Mammary epithelial cell (primary cell): ENCODE measurements at regions of chr11 and their contacts with region 1.

Region 1: DNA sequence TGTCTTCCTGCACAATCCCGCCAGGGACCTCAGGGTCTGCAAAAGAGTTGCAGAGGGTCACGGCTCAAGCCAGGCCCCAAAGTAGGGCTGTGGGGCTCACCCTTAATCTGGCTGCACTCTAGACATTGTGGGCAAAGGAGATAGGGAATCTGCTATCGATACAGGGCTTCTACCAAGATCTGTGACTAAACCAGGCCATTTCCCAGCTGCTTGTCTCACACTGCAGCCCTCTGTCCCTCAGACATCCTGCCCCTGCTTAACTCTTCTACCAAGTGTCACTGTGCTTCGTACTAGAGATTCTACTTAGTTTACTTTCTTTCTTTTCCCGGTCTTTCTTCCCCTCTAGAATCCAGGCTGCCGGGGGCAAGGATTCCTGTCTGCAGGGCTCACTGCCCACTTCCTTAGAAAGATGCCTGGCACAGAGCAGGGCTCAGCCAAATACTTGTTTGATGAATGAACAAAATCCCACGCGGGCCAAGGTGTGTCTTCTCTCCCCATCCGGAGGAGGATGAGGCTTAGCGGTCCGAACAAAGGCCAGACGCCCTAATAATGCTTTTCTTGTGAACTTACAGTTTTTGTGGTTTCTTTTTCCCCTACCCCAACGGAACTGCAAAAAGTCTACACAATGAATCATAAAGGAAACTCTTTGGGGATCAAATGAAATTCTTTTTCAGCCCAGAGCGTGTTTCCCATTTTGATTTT is 61.3 kb upstream of the ANO1 start:
- DNase-seq: peak; percentile 98
- H3K4me3 ChIP-seq: no peak overlapping the region
- H3K27ac ChIP-seq: peak overlapping the region; percentile 83
- H3K4me1 ChIP-seq: peaks cover 53% of the 10 kb centered on the region
- H3K27me3 ChIP-seq: no peaks in the 10 kb centered on the region
- CTCF ChIP-seq: no peak

Region 2: GRCh38 chr11:70065328-70066151 is 48.7 kb after region 1 on chr11:
- CTCF ChIA-PET with region 1: no interaction called
- dilution Hi-C with region 1: no loop called
- in situ Hi-C with region 1: no loop called
- intact Hi-C with region 1: loop called (anchors 2 kb)
- DNase-seq: no peak
- H3K4me3 ChIP-seq: no peak overlapping the region
- H3K27ac ChIP-seq: peak overlapping the region; percentile 87
- H3K4me1 ChIP-seq: peaks cover 60% of the 10 kb centered on the region
- H3K27me3 ChIP-seq: no peaks in the 10 kb centered on the region
- CTCF ChIP-seq: no peak